ENCODE measurements at regions of chr12 and their contacts with region 1.

Region 1: GRCh38 chr12:67928621-67929388 is 60.4 kb upstream of the IFNG-AS1 start:
- DNase-seq: no peak
- H3K4me3 Mint-ChIP-seq: no peak overlapping the region
- H3K27ac Mint-ChIP-seq: no peak overlapping the region
- H3K4me1 Mint-ChIP-seq: peaks cover 10% of the 10 kb centered on the region
- H3K27me3 Mint-ChIP-seq: peaks cover 4% of the 10 kb centered on the region
- CTCF ChIP-seq: no peak

Region 2: DNA sequence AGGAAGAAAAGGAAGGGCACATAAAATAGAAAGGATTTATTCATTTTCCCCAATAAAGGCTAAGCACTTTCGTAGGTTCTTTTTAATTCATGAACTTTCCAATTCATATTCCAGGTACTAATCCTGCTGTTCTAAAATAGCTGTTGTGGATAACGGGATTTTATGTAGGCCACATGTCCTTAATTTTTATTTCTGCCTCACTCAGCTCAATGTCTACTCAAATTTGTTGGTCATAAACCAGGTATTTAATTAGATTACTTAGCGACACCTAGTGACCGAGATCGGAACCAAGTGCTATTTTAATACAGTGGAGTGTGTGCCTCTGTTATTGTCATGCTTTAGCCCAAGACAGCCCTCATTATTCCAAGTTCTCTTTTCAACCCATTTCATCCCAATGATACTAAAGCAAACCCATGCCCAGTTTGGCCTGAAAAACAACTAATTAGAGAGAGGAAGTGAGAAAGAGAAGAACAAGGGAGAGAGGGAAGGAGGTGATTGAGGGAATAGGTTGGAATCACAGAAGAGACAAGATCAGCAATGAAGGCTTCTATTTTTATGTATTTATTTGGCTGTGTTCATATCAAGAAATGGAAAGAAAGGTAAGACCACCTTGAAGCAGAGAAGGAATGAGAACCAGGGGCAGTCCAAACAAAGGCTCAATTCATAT is 14.6 kb after region 1 on chr12:
- CTCF ChIA-PET with region 1: interaction called, 11 read pairs
- POLR2A ChIA-PET with region 1: interaction called, 3 read pairs
- intact Hi-C with region 1: no loop called
- DNase-seq: peak; percentile 78
- H3K4me3 Mint-ChIP-seq: no peak overlapping the region
- H3K27ac Mint-ChIP-seq: no peak overlapping the region
- H3K4me1 Mint-ChIP-seq: peaks cover 9% of the 10 kb centered on the region
- H3K27me3 Mint-ChIP-seq: no peaks in the 10 kb centered on the region
- CTCF ChIP-seq: peak; percentile 73

Measured in MCF 10A (cell line).